CD4-positive, alpha-beta T cell (primary cell): ENCODE measurements at regions of chr3 and their contacts with region 1.

Region 1: DNA sequence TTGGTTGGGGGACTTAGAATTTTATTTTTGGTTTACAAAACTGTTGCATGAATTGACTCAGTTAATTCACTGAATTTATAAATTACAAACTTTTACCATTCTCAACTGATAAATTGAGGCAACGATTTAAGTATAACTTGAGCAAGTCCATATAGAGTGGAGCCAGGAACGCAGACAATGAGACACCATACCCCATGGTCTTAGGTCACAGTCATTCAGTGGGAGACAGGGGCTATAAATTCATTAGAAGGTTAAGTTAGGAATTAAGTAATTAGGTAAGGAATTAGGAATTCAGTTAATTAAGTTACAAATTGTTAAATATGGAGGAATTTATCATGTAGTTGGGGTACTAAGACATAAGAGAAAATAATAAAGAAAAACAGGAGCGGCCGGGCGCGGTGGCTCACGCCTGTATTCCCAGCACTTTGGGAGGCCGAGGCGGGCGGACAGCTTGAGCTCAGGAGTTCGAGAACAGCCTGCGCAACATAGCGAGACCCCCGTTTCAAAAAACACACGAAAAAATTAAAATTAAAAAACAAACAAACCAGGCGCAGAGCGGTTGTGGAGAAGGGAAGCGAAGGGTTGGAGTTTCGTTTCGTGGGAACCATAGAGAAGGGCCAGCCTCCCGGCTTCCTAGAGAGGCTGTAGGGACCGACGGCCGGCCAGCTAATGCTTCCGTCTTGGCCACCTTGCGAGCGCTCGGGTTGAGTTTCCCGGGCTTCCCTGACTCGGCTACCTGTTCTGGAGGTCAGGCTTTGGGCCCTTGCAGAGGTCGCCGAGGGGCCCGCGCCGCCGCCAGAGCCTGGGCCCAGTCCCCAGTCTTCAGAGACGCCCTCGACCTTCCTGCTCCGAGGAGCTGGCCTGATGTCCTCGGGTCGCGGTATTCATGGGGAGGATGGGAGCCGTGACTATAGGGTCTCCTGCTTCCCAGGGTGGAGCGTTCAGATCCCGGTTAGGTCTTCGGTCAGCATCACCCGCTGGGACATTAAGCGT is at the start of gene ZNF619:
- DNase-seq: peak in 13 of 14 experiments; percentile 22 to 80 (median 46)
- ATAC-seq: peak; percentile 80
- H3K4me3 ChIP-seq: peak within 1 kb of the TSS; percentile 80
- H3K4me3 Mint-ChIP-seq: peak within 1 kb of the TSS; percentile 87
- H3K27ac ChIP-seq: peak within 1 kb of the TSS in 1 of 2 donors; percentile 61
- H3K27ac Mint-ChIP-seq: peak within 1 kb of the TSS; percentile 64
- H3K4me1 ChIP-seq: peaks cover 17% of the 10 kb centered on the region
- H3K4me1 Mint-ChIP-seq: peaks cover 24% of the 10 kb centered on the region
- H3K27me3 ChIP-seq: no peaks in the 10 kb centered on the region
- H3K27me3 Mint-ChIP-seq: no peaks in the 10 kb centered on the region
- CTCF ChIP-seq: no peak
- total RNA-seq, gene ZNF619: 2.6 to 2.9 TPM

Region 2: DNA sequence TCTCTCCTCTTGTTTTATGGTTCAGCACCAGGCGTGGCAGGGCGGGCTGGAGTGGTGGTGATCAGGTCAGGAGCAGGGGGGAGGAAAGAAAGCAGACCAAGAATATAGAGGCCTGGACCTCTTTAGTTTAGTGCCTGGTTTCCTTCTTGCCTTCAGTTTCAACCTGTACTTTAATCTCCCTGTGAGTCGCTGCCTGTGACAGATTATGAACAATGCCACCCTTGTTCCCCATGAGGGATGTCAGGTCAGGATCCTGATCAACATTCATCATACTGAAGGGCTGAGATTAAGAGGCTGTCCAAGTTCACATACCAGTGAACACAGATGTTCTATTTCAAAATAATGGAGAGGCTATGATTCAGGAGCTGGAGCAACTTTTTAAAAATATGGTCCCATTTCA is 78.4 kb before region 1 on chr3:
- CTCF ChIA-PET with region 1: no interaction called
- POLR2A ChIA-PET with region 1: no interaction called
- intact Hi-C with region 1: no loop called
- DNase-seq: no peak
- ATAC-seq: no peak
- H3K4me3 ChIP-seq: no peak overlapping the region
- H3K4me3 Mint-ChIP-seq: no peak overlapping the region
- H3K27ac ChIP-seq: no peak overlapping the region
- H3K27ac Mint-ChIP-seq: no peak overlapping the region
- H3K4me1 ChIP-seq: no peaks in the 10 kb centered on the region
- H3K4me1 Mint-ChIP-seq: no peaks in the 10 kb centered on the region
- H3K27me3 ChIP-seq: no peaks in the 10 kb centered on the region
- H3K27me3 Mint-ChIP-seq: peaks cover under 1% of the 10 kb centered on the region
- CTCF ChIP-seq: no peak

Region 3: GRCh38 chr3:40464339-40465110 is 12.2 kb before region 1 on chr3:
- CTCF ChIA-PET with region 1: no interaction called
- POLR2A ChIA-PET with region 1: interaction called, 16 read pairs
- intact Hi-C with region 1: loop called in 1 of 2 experiments (anchors 2 kb)
- DNase-seq: peak in 5 of 14 experiments; percentile 26 to 81 (median 71)
- ATAC-seq: peak; percentile 96
- H3K4me3 ChIP-seq: no peak overlapping the region
- H3K4me3 Mint-ChIP-seq: peak overlapping the region; percentile 40
- H3K27ac ChIP-seq: peak overlapping the region; percentile 0 to 33
- H3K27ac Mint-ChIP-seq: peak overlapping the region; percentile 75
- H3K4me1 ChIP-seq: peaks cover 13% of the 10 kb centered on the region
- H3K4me1 Mint-ChIP-seq: peaks cover 38% of the 10 kb centered on the region
- H3K27me3 ChIP-seq: no peaks in the 10 kb centered on the region
- H3K27me3 Mint-ChIP-seq: no peaks in the 10 kb centered on the region
- CTCF ChIP-seq: no peak